PC-9 (cell line): ENCODE measurements at regions of chr2 and their contacts with region 1.

Region 1: GRCh38 chr2:203683932-203684556 is 22.4 kb upstream of the CD28 start:
- DNase-seq: peak; percentile 35 to 79
- H3K4me3 ChIP-seq: no peak overlapping the region
- H3K27ac ChIP-seq: peak overlapping the region; percentile 87
- H3K4me1 ChIP-seq: peaks cover 25% of the 10 kb centered on the region
- H3K27me3 ChIP-seq: no peaks in the 10 kb centered on the region
- CTCF ChIP-seq: no peak

Region 2: DNA sequence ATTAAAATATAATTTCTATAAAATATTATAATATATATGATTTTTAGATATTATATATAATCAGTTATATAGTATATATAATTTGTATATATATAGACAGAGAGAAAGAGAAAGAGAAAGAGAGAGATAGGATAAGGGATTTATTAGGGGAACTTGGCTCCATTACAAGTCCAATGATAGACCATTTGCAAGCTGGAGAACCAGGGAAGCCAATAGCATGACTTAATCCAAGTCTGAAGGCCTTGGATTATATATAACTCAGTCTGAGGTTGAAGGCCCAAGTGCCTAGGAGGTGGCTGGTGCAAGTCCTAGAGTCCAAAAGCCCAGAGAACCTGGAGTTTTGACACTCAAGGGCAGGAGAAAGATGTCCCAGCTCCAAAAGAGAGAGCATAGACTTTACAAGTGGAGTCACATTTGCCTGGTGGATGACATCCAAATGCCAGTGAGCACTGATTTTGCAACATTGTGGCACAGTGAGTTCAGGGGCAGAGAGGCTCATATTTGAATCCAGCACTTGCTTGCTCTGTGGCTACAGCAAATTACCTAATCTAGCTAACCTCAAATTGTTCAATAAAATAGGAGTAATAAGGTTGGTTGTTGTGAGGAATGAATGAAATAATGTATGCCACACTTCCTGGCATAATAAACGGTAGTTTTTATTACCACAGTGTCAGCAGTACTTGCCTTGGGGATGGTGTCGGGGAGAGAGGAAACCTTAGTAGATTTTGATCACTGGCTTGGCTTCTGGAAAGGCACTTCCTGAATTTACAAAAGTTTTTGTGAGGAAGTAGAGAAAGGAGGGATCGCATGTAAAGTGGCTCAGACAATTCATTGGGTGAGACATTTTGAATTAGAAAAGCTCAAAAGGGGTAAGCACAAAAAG is 47.2 kb before region 1 on chr2:
- CTCF ChIA-PET with region 1: no interaction called
- POLR2A ChIA-PET with region 1: no interaction called
- intact Hi-C with region 1: no loop called
- DNase-seq: no peak
- H3K4me3 ChIP-seq: no peak overlapping the region
- H3K27ac ChIP-seq: no peak overlapping the region
- H3K4me1 ChIP-seq: no peaks in the 10 kb centered on the region; the same call in 1 of the 2 replicates
- H3K27me3 ChIP-seq: no peaks in the 10 kb centered on the region
- CTCF ChIP-seq: no peak

Region 3: GRCh38 chr2:203656522-203657287 is 27.3 kb before region 1 on chr2:
- CTCF ChIA-PET with region 1: no interaction called
- POLR2A ChIA-PET with region 1: no interaction called
- intact Hi-C with region 1: no loop called
- DNase-seq: peak in 1 of 2 experiments; percentile 9
- H3K4me3 ChIP-seq: no peak overlapping the region
- H3K27ac ChIP-seq: no peak overlapping the region
- H3K4me1 ChIP-seq: no peaks in the 10 kb centered on the region
- H3K27me3 ChIP-seq: no peaks in the 10 kb centered on the region
- CTCF ChIP-seq: no peak

Region 4: GRCh38 chr2:203759690-203760365 is 75.8 kb after region 1 on chr2:
- CTCF ChIA-PET with region 1: no interaction called
- POLR2A ChIA-PET with region 1: no interaction called
- intact Hi-C with region 1: loop called (anchors 2 kb)
- DNase-seq: peak; percentile 74 to 95
- H3K4me3 ChIP-seq: peak overlapping the region; percentile 27; the same call in 1 of the 2 replicates
- H3K27ac ChIP-seq: peak overlapping the region; percentile 93
- H3K4me1 ChIP-seq: peaks cover 40% of the 10 kb centered on the region
- H3K27me3 ChIP-seq: no peaks in the 10 kb centered on the region
- CTCF ChIP-seq: no peak